HepG2 (cell line): ENCODE measurements at regions of chr14 and their contacts with region 1.

Region 1: GRCh38 chr14:24093901-24094761 is at the start of gene PCK2:
- DNase-seq: peak; percentile 99
- ATAC-seq: peak; percentile 86
- H3K4me3 ChIP-seq: peak within 1 kb of the TSS; percentile 86 to 98 (median 97)
- H3K27ac ChIP-seq: peak within 1 kb of the TSS; percentile 87
- H3K4me1 ChIP-seq: peaks cover 62% of the 10 kb centered on the region
- H3K27me3 ChIP-seq: peaks cover 0 to 6% of the 10 kb centered on the region in 2 experiments; a peak in 1 of 5 replicates
- CTCF ChIP-seq: peak; percentile 66
- EP300 ChIP-seq: peak; percentile 23 to 86; a peak in 3 of 4 replicates
- POLR2A ChIP-seq: peak in 1 of 2 experiments; percentile 98; a peak in 2 of 4 replicates
- RAD21 ChIP-seq: peak; percentile 83
- total RNA-seq, gene PCK2: 118 and 129 TPM in 2 replicates

Region 2: DNA sequence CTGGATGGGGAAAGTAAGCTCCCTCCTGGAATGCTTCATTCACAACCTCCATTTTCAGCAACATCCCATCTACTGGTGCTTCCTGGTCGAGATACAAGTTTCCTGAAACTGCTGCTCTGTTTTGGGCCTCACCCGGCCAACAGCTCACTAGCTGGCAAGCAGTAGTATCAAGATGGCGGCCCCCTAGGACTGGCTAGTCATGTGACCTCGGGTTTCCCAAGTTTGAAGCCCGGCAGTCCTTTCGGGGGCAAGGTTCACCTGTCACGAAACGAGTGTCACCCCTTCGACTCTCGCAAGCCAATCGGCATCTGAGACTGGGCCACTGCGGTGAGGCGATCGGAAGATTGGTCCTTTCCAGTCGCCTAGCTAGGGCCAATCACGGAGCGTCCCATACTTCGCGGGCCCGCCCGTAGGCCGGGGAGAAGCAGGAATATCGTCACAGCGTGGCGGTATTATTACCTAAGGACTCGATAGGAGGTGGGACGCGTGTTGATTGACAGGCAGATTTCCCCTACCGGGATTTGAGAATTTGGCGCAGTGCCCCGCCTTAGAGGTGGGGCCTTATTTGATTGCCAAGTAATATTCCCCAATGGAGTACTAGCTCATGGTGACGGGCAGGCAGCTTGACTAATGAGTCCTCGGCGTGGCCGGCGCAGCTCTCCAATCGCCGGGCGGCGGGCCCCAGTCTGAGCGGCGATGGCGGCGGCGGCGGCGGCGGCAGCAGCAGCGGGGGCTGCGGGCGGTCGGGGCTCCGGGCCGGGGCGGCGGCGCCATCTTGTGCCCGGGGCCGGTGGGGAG is 773.2 kb before region 1 on chr14 and contains the start of gene PABPN1:
- CTCF ChIA-PET with region 1: no interaction called
- POLR2A ChIA-PET with region 1: interaction called, 47 read pairs
- in situ Hi-C with region 1: no loop called
- intact Hi-C with region 1: no loop called
- DNase-seq: peak; percentile 100
- ATAC-seq: peak; percentile 94
- H3K4me3 ChIP-seq: peak within 1 kb of the TSS; percentile 79 to 99 (median 98)
- H3K27ac ChIP-seq: peak within 1 kb of the TSS; percentile 95
- H3K4me1 ChIP-seq: peaks cover 36% of the 10 kb centered on the region
- H3K27me3 ChIP-seq: peaks cover 0 to 6% of the 10 kb centered on the region in 2 experiments; a peak in 2 of 5 replicates
- CTCF ChIP-seq: peak; percentile 10
- EP300 ChIP-seq: peak; percentile 68 to 90; a peak in 3 of 4 replicates
- POLR2A ChIP-seq: peak in 1 of 2 experiments; percentile 91; a peak in 2 of 4 replicates
- RAD21 ChIP-seq: peak; percentile 67
- total RNA-seq, gene PABPN1: 173 and 233 TPM in 2 replicates

Region 3: GRCh38 chr14:24013654-24014514 is 80.2 kb before region 1 on chr14:
- CTCF ChIA-PET with region 1: interaction called, 86 read pairs
- POLR2A ChIA-PET with region 1: interaction called, 5 read pairs
- in situ Hi-C with region 1: loop called (anchors 5 kb)
- intact Hi-C with region 1: loop called (anchors 1 kb)
- DNase-seq: peak; percentile 92
- ATAC-seq: peak; percentile 98
- H3K4me3 ChIP-seq: no peak overlapping the region
- H3K27ac ChIP-seq: no peak overlapping the region
- H3K4me1 ChIP-seq: peaks cover 53% of the 10 kb centered on the region
- H3K27me3 ChIP-seq: no peaks in the 10 kb centered on the region
- CTCF ChIP-seq: peak; percentile 100
- EP300 ChIP-seq: peak in 1 of 2 experiments; percentile 11; a peak in 1 of 4 replicates
- POLR2A ChIP-seq: no peak
- RAD21 ChIP-seq: peak; percentile 100

Region 4: DNA sequence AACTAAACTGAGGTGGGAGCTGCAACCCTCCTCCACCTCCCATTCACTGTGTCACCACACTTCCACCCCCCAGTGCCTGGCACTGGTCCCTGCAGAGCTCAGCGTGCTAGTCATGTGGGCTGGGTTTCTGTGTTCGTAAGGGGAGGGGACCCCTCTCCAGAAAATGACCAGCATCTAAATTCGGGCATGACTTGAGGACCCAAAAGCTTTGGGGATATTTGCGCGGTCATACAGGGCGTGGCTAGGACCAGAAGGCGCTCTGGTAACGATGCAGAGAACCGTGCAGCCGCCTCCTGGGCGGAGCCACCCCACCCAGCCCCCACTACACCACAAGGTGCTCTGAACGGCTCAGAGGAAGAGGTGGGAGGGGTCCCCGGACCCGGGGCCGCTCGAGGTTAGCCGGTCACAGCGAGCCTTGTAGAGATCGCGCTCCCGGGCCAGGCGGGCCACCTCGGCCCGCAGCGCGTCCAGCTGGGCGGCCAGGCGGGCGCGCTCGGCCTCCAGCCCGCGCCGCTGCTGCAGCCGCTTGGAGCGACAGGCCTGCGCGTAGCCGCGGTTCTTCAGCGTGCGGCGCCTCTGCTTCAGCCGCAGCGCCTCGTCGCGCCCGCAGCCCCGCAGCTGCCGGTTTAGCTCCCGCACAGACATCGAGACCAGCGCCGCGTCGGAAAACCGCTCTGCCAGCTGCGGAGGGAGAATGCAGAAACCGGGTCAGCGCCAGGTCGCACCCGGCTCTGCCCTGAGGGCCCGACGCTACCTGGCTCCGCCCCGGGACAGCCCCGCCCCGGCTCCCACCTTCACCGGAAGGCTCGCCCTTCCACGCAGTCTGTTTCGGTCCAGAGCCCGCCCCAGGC is 13.0 kb before region 1 on chr14:
- CTCF ChIA-PET with region 1: interaction called, 3 read pairs
- POLR2A ChIA-PET with region 1: interaction called, 131 read pairs
- in situ Hi-C with region 1: no loop called
- intact Hi-C with region 1: no loop called
- DNase-seq: peak; percentile 38
- ATAC-seq: peak; percentile 83
- H3K4me3 ChIP-seq: peak overlapping the region; percentile 53 to 77 (median 73)
- H3K27ac ChIP-seq: no peak overlapping the region
- H3K4me1 ChIP-seq: peaks cover 22% of the 10 kb centered on the region
- H3K27me3 ChIP-seq: peaks cover 18 to 81% of the 10 kb centered on the region in 2 experiments
- CTCF ChIP-seq: peak; percentile 2; the same call in 1 of the 2 replicates
- EP300 ChIP-seq: no peak
- POLR2A ChIP-seq: peak in 1 of 2 experiments; percentile 33; a peak in 1 of 4 replicates
- RAD21 ChIP-seq: peak; percentile 55; the same call in 1 of the 2 replicates

Region 5: DNA sequence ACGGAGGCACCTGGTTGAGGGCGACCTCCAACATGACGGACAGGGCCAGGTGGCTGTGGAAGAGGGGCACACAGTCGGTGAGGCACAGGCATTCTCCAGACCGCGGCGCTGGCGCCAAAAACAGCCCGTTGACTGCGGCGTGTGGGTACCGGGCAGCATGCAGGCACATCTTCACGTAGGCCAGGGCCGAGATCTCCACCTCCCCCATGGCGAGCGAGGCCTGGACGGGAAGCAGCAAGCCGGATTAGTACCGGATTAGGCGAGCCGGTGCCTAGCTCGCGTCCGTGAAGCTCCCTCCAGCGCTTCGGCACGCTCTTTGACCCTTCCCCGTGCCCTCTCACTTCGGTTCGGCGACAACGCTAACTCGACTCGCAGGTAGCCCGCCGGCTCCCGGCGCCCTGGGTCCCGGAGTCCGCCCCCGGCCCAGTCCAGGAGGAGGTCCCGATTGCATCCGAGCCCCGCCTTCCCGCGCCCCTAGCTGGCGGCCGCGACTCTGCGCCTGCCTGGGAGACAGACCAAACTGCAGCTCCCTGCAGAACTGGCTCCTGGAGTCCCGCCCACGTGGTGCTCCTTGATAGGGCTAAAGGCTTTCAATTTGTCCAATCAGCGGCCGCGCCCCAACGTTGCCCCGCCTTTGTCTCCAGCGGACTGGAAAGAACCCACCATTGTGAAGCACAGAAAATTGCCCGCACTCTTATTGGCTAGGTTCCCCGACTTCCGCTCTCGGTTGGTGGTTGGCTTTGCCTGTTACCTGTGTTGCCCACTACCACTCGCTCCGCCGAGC is 47.2 kb after region 1 on chr14 and contains the start of gene EMC9:
- CTCF ChIA-PET with region 1: no interaction called
- POLR2A ChIA-PET with region 1: interaction called, 258 read pairs
- in situ Hi-C with region 1: no loop called
- intact Hi-C with region 1: loop called (anchors 1 kb)
- DNase-seq: peak; percentile 100
- ATAC-seq: peak; percentile 88
- H3K4me3 ChIP-seq: peak within 1 kb of the TSS; percentile 83 to 99 (median 95)
- H3K27ac ChIP-seq: peak within 1 kb of the TSS; percentile 86
- H3K4me1 ChIP-seq: peaks cover 77% of the 10 kb centered on the region
- H3K27me3 ChIP-seq: peaks cover 0 to 3% of the 10 kb centered on the region in 2 experiments; a peak in 1 of 5 replicates
- CTCF ChIP-seq: peak; percentile 53
- EP300 ChIP-seq: peak in 1 of 2 experiments; percentile 70; a peak in 2 of 4 replicates
- POLR2A ChIP-seq: peak in 1 of 2 experiments; percentile 88; a peak in 2 of 4 replicates
- RAD21 ChIP-seq: peak; percentile 84
- total RNA-seq, gene EMC9: 71.2 and 78.7 TPM in 2 replicates

Region 6: DNA sequence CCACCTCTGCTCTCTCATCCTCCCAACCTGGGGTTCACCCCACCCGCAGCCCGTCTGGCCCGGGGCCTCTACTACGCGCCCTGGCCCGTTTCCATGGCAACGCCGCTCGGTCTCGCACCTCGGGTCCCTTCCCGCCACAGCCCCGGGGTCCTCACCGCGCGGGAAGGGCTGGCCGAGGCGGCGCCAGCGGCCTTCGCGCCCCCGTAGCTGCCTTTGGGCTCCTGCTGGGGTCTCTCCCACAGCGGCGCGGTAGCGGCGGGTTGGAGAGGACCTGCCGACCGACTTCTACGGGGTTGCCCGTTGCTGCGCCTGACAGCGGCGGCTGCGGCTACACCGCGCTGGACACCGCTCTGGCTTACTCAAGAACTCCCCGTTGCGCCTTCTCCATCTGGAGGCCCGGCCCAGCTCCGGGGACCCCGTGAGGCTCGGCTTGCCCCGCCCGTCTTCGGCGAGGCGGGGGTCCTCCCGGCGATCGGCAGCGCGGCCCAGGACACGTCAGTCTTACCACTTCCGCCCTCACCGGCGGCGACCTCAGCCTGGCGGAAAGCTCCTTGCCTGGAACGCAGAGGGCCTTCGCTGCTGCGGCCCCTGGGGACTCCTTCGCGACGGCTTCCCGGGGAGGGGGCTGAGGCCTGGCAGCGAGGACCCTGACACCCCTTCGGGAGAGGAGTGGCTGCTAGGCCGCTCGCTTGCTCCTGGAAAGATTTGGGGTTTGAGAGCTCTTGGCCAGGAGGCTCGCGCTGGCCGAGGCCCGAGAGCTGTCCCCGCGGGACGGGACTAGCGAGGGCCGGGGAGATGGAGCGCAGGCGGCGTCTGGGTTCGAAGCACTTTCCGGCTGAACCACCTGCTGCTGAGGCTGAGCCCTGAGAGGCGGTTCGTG is 101.3 kb after region 1 on chr14 and contains the start of gene TM9SF1:
- CTCF ChIA-PET with region 1: no interaction called
- POLR2A ChIA-PET with region 1: interaction called, 52 read pairs
- in situ Hi-C with region 1: no loop called
- intact Hi-C with region 1: no loop called
- DNase-seq: peak; percentile 93
- ATAC-seq: peak; percentile 94
- H3K4me3 ChIP-seq: peak within 1 kb of the TSS; percentile 79 to 91 (median 85)
- H3K27ac ChIP-seq: peak within 1 kb of the TSS; percentile 84
- H3K4me1 ChIP-seq: peaks cover 65% of the 10 kb centered on the region
- H3K27me3 ChIP-seq: no peaks in the 10 kb centered on the region; a peak in 1 of 5 replicates
- CTCF ChIP-seq: peak; percentile 54
- EP300 ChIP-seq: peak; percentile 7 to 39; a peak in 1 of 4 replicates
- POLR2A ChIP-seq: peak in 1 of 2 experiments; percentile 81; a peak in 2 of 4 replicates
- RAD21 ChIP-seq: peak; percentile 52
- total RNA-seq, gene TM9SF1: 56.4 and 110 TPM in 2 replicates

Region 7: DNA sequence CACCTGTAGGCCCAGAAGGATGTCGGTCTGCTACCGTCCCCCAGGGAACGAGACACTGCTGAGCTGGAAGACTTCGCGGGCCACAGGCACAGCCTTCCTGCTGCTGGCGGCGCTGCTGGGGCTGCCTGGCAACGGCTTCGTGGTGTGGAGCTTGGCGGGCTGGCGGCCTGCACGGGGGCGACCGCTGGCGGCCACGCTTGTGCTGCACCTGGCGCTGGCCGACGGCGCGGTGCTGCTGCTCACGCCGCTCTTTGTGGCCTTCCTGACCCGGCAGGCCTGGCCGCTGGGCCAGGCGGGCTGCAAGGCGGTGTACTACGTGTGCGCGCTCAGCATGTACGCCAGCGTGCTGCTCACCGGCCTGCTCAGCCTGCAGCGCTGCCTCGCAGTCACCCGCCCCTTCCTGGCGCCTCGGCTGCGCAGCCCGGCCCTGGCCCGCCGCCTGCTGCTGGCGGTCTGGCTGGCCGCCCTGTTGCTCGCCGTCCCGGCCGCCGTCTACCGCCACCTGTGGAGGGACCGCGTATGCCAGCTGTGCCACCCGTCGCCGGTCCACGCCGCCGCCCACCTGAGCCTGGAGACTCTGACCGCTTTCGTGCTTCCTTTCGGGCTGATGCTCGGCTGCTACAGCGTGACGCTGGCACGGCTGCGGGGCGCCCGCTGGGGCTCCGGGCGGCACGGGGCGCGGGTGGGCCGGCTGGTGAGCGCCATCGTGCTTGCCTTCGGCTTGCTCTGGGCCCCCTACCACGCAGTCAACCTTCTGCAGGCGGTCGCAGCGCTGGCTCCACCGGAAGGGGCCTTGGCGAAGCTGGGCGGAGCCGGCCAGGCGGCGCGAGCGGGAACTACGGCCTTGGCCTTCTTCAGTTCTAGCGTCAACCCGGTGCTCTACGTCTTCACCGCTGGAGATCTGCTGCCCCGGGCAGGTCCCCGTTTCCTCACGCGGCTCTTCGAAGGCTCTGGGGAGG is 216.8 kb after region 1 on chr14 and contains the start of gene LTB4R:
- CTCF ChIA-PET with region 1: no interaction called
- POLR2A ChIA-PET with region 1: interaction called, 28 read pairs
- in situ Hi-C with region 1: no loop called
- intact Hi-C with region 1: no loop called
- DNase-seq: no peak
- ATAC-seq: no peak
- H3K4me3 ChIP-seq: no peak within 1 kb of the TSS
- H3K27ac ChIP-seq: peak within 1 kb of the TSS; percentile 4
- H3K4me1 ChIP-seq: peaks cover 61% of the 10 kb centered on the region
- H3K27me3 ChIP-seq: no peaks in the 10 kb centered on the region; a peak in 1 of 5 replicates
- CTCF ChIP-seq: no peak
- EP300 ChIP-seq: no peak
- POLR2A ChIP-seq: no peak
- RAD21 ChIP-seq: no peak
- total RNA-seq, gene LTB4R: 1.00 and 3.2 TPM in 2 replicates

Region 8: DNA sequence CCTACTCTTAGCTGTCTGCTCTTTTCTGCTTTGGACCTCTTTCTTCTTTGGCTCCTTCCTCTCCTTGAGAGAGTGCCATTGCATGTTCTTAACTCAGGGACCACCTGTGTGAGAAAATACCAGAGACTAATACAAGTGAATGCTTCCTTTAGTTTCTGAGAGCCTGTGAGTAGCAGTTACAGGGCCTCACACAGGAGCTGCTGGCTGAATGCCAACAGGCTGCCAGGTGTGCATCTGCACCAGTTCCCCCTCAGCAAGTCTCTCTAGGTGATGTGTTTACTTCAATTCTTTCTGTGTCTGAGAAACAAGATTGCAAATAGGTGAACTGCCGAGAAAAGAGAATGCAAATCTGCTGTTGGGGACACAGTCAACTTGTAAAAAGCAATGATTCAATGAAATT is 847.6 kb after region 1 on chr14:
- CTCF ChIA-PET with region 1: no interaction called
- POLR2A ChIA-PET with region 1: no interaction called
- in situ Hi-C with region 1: no loop called
- intact Hi-C with region 1: no loop called
- DNase-seq: no peak
- ATAC-seq: peak; percentile 36; the same call in 2 of the 3 replicates
- H3K4me3 ChIP-seq: no peak overlapping the region
- H3K27ac ChIP-seq: no peak overlapping the region
- H3K4me1 ChIP-seq: 0 out of 2 replicates have a peak, but pooled peaks cover 10% of the 10 kb centered on the region
- H3K27me3 ChIP-seq: no peaks in the 10 kb centered on the region
- CTCF ChIP-seq: no peak
- EP300 ChIP-seq: no peak
- POLR2A ChIP-seq: no peak
- RAD21 ChIP-seq: no peak